Caco-2 (cell line): ENCODE measurements at regions of chr2 and their contacts with region 1.

Region 1: GRCh38 chr2:241508240-241509154 is at the start of gene STK25:
- DNase-seq: peak; percentile 96 to 97
- H3K4me3 ChIP-seq: peak within 1 kb of the TSS; percentile 81
- H3K4me3 Mint-ChIP-seq: peak within 1 kb of the TSS; percentile 86
- H3K27ac Mint-ChIP-seq: peak within 1 kb of the TSS; percentile 85
- H3K4me1 ChIP-seq: no peaks in the 10 kb centered on the region
- H3K4me1 Mint-ChIP-seq: no peaks in the 10 kb centered on the region
- H3K27me3 ChIP-seq: no peaks in the 10 kb centered on the region
- H3K27me3 Mint-ChIP-seq: no peaks in the 10 kb centered on the region
- CTCF ChIP-seq: no peak
- total RNA-seq, gene STK25: 92.6 and 101 TPM in 2 replicates

Region 2: GRCh38 chr2:241546771-241547498 is 38.4 kb after region 1 on chr2:
- CTCF ChIA-PET with region 1: no interaction called
- POLR2A ChIA-PET with region 1: no interaction called
- intact Hi-C with region 1: loop called (anchors 5 kb)
- DNase-seq: peak; percentile 58 to 76
- H3K4me3 ChIP-seq: no peak overlapping the region; the same call in 1 of the 2 replicates
- H3K4me3 Mint-ChIP-seq: no peak overlapping the region
- H3K27ac Mint-ChIP-seq: no peak overlapping the region
- H3K4me1 ChIP-seq: peaks cover 26% of the 10 kb centered on the region
- H3K4me1 Mint-ChIP-seq: no peaks in the 10 kb centered on the region
- H3K27me3 ChIP-seq: no peaks in the 10 kb centered on the region
- H3K27me3 Mint-ChIP-seq: no peaks in the 10 kb centered on the region
- CTCF ChIP-seq: no peak

Region 3: GRCh38 chr2:241558532-241559322 is 50.2 kb after region 1 on chr2 and contains the start of gene BOK:
- CTCF ChIA-PET with region 1: interaction called, 3 read pairs
- POLR2A ChIA-PET with region 1: no interaction called
- intact Hi-C with region 1: loop called (anchors 2 kb)
- DNase-seq: peak; percentile 73
- H3K4me3 ChIP-seq: peak within 1 kb of the TSS; percentile 63
- H3K4me3 Mint-ChIP-seq: peak within 1 kb of the TSS; percentile 69
- H3K27ac Mint-ChIP-seq: peak within 1 kb of the TSS; percentile 55
- H3K4me1 ChIP-seq: no peaks in the 10 kb centered on the region
- H3K4me1 Mint-ChIP-seq: no peaks in the 10 kb centered on the region
- H3K27me3 ChIP-seq: no peaks in the 10 kb centered on the region
- H3K27me3 Mint-ChIP-seq: no peaks in the 10 kb centered on the region
- CTCF ChIP-seq: no peak
- total RNA-seq, gene BOK: 18.0 and 18.6 TPM in 2 replicates